Right ventricle myocardium inferior (tissue), 1 donor: ENCODE measurements at regions of chr17 and their contacts with region 1.

Region 1: GRCh38 chr17:32831627-32832243 is 45.2 kb downstream of the MYO1D start:
- DNase-seq: no peak
- ATAC-seq: no peak

Region 2: DNA sequence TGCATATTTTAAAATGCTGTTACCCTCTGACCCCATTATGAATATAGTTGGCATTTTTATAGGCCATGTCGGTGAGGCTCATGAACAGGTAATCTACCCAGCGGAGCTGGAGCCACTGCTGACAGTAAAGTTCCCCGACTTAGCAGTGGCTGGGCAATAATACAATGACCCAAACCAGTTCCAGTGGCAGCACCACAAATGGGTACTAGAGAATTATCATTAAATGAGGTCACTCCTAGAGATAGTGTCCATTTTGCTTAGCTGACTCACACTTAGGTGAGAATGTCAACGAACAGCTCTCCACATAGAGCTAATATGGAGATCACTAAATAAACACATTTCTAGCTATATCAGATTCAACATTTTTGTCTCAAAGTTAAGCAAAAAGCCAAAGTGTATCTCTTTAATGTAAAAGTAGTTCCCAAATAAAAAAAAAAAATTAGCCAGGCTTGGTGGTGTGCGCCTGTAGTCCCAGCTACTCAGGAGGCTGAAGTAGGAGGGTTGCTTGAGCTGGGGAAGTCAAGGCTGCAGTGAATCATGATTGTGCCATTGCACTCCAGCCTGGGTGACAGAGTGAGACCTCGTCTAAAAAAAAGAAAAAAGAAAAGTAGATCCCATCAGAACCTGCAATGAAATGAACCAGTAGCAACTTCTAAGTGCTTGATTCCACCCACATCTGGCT is 37.8 kb after region 1 on chr17:
- intact Hi-C with region 1: loop called (anchors 2 kb)
- DNase-seq: no peak
- ATAC-seq: no peak

Region 3: DNA sequence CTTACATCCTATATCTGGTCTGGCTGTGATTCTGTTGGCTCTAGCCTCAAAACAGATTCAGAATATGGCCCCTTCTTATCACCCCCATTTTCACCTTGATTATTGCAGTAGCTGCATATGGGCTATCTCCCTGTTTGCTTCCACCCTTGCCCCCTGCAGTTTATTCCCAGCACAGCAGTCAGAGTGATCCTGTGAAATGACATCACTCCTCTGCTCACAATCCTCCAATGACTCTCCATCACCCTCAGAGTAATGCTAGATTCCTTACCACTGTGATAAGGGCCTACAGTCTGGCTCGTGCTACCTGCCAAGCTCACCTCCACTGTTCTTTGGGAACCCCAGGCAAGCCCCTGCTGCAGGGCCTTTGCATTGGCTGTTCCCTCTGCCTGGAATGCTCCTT is 368.9 kb after region 1 on chr17:
- intact Hi-C with region 1: no loop called
- DNase-seq: no peak
- ATAC-seq: no peak